ENCODE measurements at regions of chr2 and their contacts with region 1.

Region 1: GRCh38 chr2:84314901-84315330 is 144.2 kb downstream of the SUCLG1 start:
- DNase-seq: peak; percentile 88
- ATAC-seq: peak; percentile 94
- H3K4me3 Mint-ChIP-seq: no peak overlapping the region
- H3K27ac Mint-ChIP-seq: no peak overlapping the region
- H3K4me1 Mint-ChIP-seq: peaks cover 4% of the 10 kb centered on the region
- H3K27me3 Mint-ChIP-seq: peaks cover 5% of the 10 kb centered on the region
- CTCF ChIP-seq: peak; percentile 85

Region 2: GRCh38 chr2:84302513-84303412 is 12.2 kb before region 1 on chr2:
- CTCF ChIA-PET with region 1: interaction called, 39 read pairs
- POLR2A ChIA-PET with region 1: no interaction called
- intact Hi-C with region 1: no loop called
- DNase-seq: peak; percentile 54
- ATAC-seq: peak; percentile 64
- H3K4me3 Mint-ChIP-seq: no peak overlapping the region
- H3K27ac Mint-ChIP-seq: no peak overlapping the region
- H3K4me1 Mint-ChIP-seq: no peaks in the 10 kb centered on the region
- H3K27me3 Mint-ChIP-seq: peaks cover 8% of the 10 kb centered on the region
- CTCF ChIP-seq: peak; percentile 67

Region 3: GRCh38 chr2:84362541-84362940 is 47.6 kb after region 1 on chr2:
- CTCF ChIA-PET with region 1: no interaction called
- POLR2A ChIA-PET with region 1: no interaction called
- intact Hi-C with region 1: no loop called
- DNase-seq: no peak
- ATAC-seq: no peak
- H3K4me3 Mint-ChIP-seq: no peak overlapping the region
- H3K27ac Mint-ChIP-seq: no peak overlapping the region
- H3K4me1 Mint-ChIP-seq: no peaks in the 10 kb centered on the region
- H3K27me3 Mint-ChIP-seq: peaks cover 17% of the 10 kb centered on the region
- CTCF ChIP-seq: no peak

Region 4: DNA sequence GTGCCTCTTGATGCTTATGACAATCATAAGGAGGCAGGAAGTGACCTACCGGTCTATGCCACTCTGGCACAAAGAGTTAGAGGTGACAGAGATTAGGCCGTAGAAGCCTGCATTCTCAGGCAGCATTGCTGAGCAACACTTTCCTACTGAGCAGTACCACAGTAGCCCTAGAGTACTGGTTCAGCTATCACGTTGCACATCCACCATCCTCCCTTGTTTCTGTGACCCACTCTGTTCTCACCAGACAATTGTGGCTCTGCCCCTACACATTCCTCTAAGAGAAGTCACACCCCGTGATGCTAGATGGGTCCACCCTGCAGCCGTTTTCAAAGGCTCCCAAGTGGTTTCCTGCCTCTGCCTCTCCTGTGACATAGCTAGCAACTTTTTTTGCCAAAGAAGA is 166.8 kb after region 1 on chr2:
- CTCF ChIA-PET with region 1: no interaction called
- POLR2A ChIA-PET with region 1: no interaction called
- intact Hi-C with region 1: no loop called
- DNase-seq: peak; percentile 49
- ATAC-seq: peak; percentile 93
- H3K4me3 Mint-ChIP-seq: no peak overlapping the region
- H3K27ac Mint-ChIP-seq: peak overlapping the region; percentile 21
- H3K4me1 Mint-ChIP-seq: peaks cover 18% of the 10 kb centered on the region
- H3K27me3 Mint-ChIP-seq: no peaks in the 10 kb centered on the region
- CTCF ChIP-seq: no peak

Measured in activated CD8-positive, alpha-beta T cell treated with anti-CD3 and anti-CD28 coated beads for 36 hours (primary cell).